Left cardiac atrium (tissue), 4 donors: ENCODE measurements at regions of chr2 and their contacts with region 1.

Region 1: GRCh38 chr2:72137498-72138010 is 10.1 kb downstream of the CYP26B1 start:
- DNase-seq: peak; percentile 67
- ATAC-seq: peak; percentile 60 to 62

Region 2: DNA sequence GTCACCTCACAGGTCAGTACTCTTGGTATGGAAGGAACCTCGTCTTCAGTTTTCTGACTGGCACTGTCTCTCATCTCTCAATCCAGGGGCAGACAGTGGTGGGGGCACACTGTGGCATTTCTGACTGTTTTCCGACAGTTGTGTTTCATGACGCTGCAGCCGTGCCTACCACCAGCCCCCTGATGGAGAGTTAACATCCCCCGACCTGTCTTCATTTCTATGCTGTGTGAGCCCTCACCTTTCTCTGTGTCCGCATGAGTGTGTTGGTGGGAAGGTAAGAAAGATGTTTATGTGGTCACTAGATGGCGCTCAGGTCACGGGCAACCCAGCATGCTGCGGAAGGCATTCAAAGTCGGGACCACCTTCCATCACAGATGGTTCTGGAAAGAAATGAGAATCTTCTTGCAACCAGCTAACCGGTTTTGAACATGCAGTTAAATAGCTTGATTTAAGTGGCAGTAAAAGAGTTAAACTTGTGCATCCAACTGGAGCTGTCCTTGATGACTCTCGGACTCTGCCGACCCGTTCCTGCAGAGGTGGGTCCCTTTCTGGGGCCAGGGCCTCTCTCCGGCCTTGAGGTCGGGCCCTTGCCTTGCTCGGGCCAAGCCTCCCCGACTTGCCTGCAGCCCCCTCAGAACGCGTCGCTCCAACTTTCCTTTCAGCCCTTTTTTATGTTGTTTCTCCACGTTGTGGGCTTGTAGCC is 591.8 kb before region 1 on chr2:
- intact Hi-C with region 1: loop called in 1 of 2 experiments (anchors 5 kb)
- DNase-seq: peak; percentile 56
- ATAC-seq: peak; percentile 68 to 80

Region 3: GRCh38 chr2:72077702-72078169 is 59.8 kb before region 1 on chr2:
- intact Hi-C with region 1: no loop called
- DNase-seq: no peak
- ATAC-seq: no peak